OCI-LY7 (cell line): ENCODE measurements at regions of chr11 and their contacts with region 1.

Region 1: DNA sequence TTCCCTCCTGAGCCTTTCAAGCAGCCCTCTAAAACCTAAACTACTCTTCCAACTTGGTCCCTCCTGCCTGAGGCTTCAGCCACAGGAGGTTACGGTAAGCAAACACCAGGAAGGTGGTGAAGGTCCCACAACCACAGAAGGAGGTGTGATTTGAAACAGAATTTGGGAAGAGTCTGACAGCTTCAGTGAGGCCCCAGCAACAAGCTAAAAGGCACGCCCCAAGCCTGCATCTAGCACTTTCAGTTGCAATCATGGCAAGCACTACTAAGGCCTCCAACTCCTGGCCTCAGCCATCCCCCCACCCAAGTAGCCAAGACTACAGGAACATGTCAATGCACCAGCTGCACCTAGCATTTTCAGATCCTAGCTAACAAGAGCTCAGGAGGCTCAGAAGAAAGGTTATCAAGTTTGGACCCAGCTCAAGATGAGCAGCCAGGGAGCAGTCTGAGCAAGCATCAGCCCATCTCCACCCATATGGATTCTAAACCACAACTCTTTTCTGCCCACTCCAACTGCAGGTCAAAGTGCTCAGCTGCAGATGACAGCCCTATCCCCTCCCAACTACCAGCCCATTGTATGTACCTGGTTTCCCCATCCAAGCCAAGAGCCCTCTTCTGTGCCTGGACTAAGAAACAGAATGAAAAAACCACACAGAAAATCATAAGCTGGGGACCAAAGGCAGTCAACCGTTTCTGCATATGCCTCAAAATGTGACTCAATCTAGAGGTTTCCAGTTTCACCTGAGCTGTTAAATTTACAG is 10.4 kb upstream of the AHNAK start:
- DNase-seq: no peak
- H3K4me3 ChIP-seq: no peak overlapping the region
- H3K27ac ChIP-seq: peak overlapping the region; percentile 48
- H3K4me1 ChIP-seq: peaks cover 36% of the 10 kb centered on the region
- CTCF ChIP-seq: no peak

Region 2: GRCh38 chr11:62463121-62463542 is 93.9 kb before region 1 on chr11:
- CTCF ChIA-PET with region 1: interaction called, 3 read pairs
- POLR2A ChIA-PET with region 1: interaction called, 10 read pairs
- intact Hi-C with region 1: no loop called
- DNase-seq: no peak
- H3K4me3 ChIP-seq: no peak overlapping the region
- H3K27ac ChIP-seq: no peak overlapping the region
- H3K4me1 ChIP-seq: peaks cover 11% of the 10 kb centered on the region
- CTCF ChIP-seq: no peak

Region 3: GRCh38 chr11:62567018-62567633 is 10.1 kb after region 1 on chr11:
- CTCF ChIA-PET with region 1: no interaction called
- POLR2A ChIA-PET with region 1: interaction called, 11 read pairs
- intact Hi-C with region 1: no loop called
- DNase-seq: no peak
- H3K4me3 ChIP-seq: no peak overlapping the region
- H3K27ac ChIP-seq: no peak overlapping the region
- H3K4me1 ChIP-seq: peaks cover 15% of the 10 kb centered on the region
- CTCF ChIP-seq: no peak

Region 4: DNA sequence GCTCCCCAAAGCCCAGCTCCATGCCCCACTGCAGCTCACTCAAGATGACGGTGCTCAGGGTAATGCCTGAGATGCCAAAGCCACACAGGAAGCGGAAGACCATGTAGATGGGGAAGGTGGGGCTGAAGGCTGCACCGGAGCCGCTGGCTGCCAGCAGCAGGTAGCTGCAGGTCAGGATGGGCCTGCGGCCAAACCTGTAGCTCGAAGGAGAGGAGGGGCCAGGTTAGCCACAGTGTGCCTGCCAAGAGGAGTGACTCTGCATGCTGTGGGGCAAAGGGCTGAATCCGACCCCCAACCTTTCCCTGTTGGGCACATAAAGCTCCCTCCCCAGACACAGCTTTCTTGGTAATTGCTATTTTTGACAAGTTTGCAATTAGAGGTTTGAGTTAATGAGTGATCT is 442.6 kb after region 1 on chr11:
- CTCF ChIA-PET with region 1: no interaction called
- POLR2A ChIA-PET with region 1: no interaction called
- intact Hi-C with region 1: no loop called
- DNase-seq: no peak
- H3K4me3 ChIP-seq: no peak overlapping the region
- H3K27ac ChIP-seq: no peak overlapping the region
- H3K4me1 ChIP-seq: no peaks in the 10 kb centered on the region
- CTCF ChIP-seq: no peak